ENCODE measurements at regions of chr2 and their contacts with region 1.

Region 1: DNA sequence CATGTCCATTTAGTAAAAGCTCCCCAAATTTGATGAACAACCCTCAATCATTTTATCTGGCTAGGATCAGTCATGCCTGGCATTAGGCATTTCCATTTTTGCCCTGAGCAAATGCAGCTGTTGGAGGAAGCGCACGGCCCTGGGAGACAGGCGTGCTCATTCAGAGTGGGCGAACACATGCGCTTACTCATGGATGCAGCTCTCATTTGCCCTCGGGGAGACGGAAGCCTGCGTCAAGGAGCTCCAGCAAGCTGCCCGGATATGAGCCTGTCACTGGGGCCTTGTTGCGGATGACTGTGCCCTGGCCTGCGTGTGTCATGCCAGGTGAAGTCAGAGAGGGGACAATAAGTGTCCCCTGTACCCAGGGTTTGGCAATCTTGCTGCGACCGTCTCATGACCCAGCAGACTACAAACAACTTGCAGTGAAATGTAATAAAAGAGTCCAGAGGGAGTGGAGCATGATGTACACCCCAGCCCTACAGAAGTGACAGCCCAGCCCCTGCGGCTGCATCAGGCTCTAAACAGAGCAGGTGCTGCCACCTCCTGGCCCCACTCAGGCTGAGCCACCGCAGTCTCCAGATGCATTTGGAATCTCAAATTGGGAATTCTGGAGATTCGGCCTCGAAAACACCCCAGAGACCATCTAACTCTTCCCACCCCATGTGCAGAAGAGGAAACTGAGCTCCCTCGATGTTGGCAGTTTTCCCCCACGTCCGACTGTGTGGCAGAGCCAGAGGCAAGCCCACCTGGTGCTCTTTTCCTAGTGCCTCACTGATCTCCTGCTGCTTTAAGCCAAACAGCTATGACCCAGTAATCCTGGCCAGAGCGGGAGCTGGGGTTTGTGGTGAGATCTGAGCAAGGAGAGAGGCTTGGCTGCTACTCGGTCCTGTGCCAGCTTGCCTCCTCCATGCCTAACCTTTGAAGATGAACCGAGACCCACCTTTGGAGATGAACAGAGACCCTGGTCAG is 105.0 kb upstream of the ALK start:
- DNase-seq: peak; percentile 24 to 52 (median 39)
- H3K4me3 ChIP-seq: no peak overlapping the region
- H3K27ac ChIP-seq: no peak overlapping the region
- H3K4me1 ChIP-seq: peaks cover 0 to 3% (median 0%) of the 10 kb centered on the region in 4 experiments
- H3K27me3 ChIP-seq: peaks cover 0 to 13% (median 0%) of the 10 kb centered on the region in 5 experiments

Region 2: GRCh38 chr2:29923110-29923721 is 103.2 kb before region 1 on chr2:
- CTCF ChIA-PET with region 1: interaction called, 14 read pairs
- POLR2A ChIA-PET with region 1: no interaction called
- DNase-seq: peak; percentile 65 to 82 (median 71)
- H3K4me3 ChIP-seq: no peak overlapping the region
- H3K27ac ChIP-seq: no peak overlapping the region
- H3K4me1 ChIP-seq: peaks cover 0 to 27% (median 15%) of the 10 kb centered on the region in 4 experiments
- H3K27me3 ChIP-seq: peaks cover 1 to 51% (median 30%) of the 10 kb centered on the region in 5 experiments

Region 3: DNA sequence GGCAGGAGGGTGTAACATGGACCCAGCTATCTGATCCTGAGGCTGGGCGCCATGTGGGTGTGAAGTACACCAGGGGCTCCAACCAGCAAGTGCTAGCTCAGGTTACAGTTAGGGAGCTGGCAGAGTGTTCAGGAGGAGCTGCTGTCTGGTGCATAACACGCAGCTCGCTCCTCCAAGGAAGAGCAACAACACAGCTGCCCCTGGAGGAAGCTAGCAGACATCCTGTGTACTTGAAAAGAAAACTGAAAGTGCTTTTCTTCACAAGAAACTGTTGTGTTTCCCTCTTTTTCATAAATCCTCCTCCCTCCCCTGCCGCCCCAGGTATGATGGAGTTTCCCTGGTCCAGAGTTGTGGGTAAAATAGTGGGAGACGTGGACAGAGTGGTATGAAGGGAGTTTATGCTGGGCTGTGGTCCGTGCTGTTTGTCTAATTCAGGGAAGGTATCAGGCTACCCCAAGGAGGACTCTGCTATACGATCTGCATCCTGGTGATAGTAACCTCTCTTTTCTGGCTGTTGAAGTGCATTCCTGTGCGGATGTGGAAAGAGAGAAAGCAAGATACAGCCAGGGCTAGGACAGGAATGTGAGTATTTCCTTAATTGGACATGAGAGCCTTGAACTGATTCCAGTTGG is 198.9 kb after region 1 on chr2:
- CTCF ChIA-PET with region 1: no interaction called
- POLR2A ChIA-PET with region 1: no interaction called
- DNase-seq: peak; percentile 63 to 88 (median 83)
- H3K4me3 ChIP-seq: peak overlapping the region; percentile 23 to 84 (median 64)
- H3K27ac ChIP-seq: peak overlapping the region; percentile 77 to 93
- H3K4me1 ChIP-seq: peaks cover 7 to 38% (median 34%) of the 10 kb centered on the region in 4 experiments
- H3K27me3 ChIP-seq: no peaks in the 10 kb centered on the region

Measured in common myeloid progenitor, CD34-positive (primary cell).